ENCODE measurements at regions of chr9 and their contacts with region 1.

Region 1: DNA sequence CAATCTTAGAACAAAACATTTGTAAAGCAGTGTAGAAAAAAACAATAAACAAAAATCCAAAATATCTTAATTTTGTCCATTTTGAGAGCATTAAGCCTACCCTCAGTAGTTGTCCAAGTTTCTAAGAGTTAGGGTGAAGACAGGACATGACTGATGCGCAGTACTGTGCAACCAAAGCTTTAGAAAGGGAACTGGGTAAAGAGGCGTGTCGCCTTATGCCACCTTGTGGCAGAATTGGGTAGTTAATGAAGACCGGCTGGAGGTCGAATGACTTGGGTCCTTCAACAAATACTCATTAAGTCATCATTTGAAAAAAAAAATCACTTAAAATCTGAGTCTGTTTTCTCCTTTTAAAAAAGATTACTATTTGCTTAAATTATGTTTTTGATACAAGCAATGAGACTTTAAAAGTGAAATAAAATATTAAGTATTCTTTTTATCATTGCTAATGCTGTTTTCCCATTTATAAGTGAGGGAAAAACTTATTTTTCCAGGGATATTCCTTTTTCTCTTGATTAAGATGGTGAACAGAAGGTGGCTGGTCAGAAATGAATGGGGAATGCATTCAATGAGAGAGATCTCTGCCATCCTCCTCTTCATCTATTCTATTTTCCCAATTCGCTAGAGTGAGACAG is 3.5 kb upstream of the RNF20 start:
- DNase-seq: peak; percentile 69 to 79
- ATAC-seq: peak; percentile 62; a peak in 5 of 6 replicates
- H3K4me3 ChIP-seq: no peak overlapping the region
- H3K27ac ChIP-seq: no peak overlapping the region
- H3K4me1 ChIP-seq: peaks cover 5% of the 10 kb centered on the region
- CTCF ChIP-seq: peak; percentile 89
- EP300 ChIP-seq: no peak
- POLR2A ChIP-seq: no peak
- RAD21 ChIP-seq: peak; percentile 76 to 78

Region 2: GRCh38 chr9:101409079-101409477 is 121.1 kb before region 1 on chr9:
- CTCF ChIA-PET with region 1: no interaction called
- POLR2A ChIA-PET with region 1: no interaction called
- DNase-seq: peak in 1 of 2 experiments; percentile 45
- ATAC-seq: no peak; a peak in 1 of 6 replicates
- H3K4me3 ChIP-seq: no peak overlapping the region
- H3K27ac ChIP-seq: no peak overlapping the region
- H3K4me1 ChIP-seq: no peaks in the 10 kb centered on the region
- CTCF ChIP-seq: no peak
- EP300 ChIP-seq: no peak
- POLR2A ChIP-seq: no peak
- RAD21 ChIP-seq: no peak

Region 3: DNA sequence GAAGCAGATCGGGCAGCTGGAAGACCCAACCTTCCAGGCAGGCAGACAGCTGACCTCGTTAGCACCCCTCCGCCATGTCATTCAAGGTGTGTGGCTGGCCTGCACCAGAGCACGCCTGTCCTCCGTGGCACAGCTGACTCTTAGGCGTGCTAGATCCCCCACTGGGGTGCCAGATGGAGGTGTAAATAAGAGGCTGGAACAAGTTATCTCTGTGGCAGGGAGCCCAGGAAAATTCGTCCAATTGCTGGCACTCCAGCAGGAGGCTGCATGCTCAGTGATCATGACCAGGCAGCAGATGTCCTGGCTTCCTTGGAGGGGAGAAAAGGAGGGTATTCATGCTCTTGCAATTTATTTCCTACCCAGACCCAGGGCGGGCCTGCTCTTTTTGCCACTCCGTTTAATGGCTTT is 86.8 kb before region 1 on chr9:
- CTCF ChIA-PET with region 1: interaction called, 81 read pairs
- POLR2A ChIA-PET with region 1: no interaction called
- DNase-seq: no peak
- ATAC-seq: no peak
- H3K4me3 ChIP-seq: no peak overlapping the region
- H3K27ac ChIP-seq: no peak overlapping the region
- H3K4me1 ChIP-seq: 0 out of 3 replicates have a peak, but pooled peaks cover 4% of the 10 kb centered on the region
- CTCF ChIP-seq: no peak
- EP300 ChIP-seq: no peak
- POLR2A ChIP-seq: no peak
- RAD21 ChIP-seq: no peak

Region 4: GRCh38 chr9:101458955-101459631 is 71.1 kb before region 1 on chr9:
- CTCF ChIA-PET with region 1: interaction called, 178 read pairs
- POLR2A ChIA-PET with region 1: interaction called, 5 read pairs
- DNase-seq: peak; percentile 58 to 81
- ATAC-seq: peak; percentile 97 to 99
- H3K4me3 ChIP-seq: no peak overlapping the region
- H3K27ac ChIP-seq: no peak overlapping the region
- H3K4me1 ChIP-seq: no peaks in the 10 kb centered on the region
- CTCF ChIP-seq: peak; percentile 81
- EP300 ChIP-seq: no peak
- POLR2A ChIP-seq: no peak
- RAD21 ChIP-seq: peak; percentile 78 to 84

Region 5: GRCh38 chr9:101477736-101478135 is 52.5 kb before region 1 on chr9:
- CTCF ChIA-PET with region 1: interaction called, 11 read pairs
- POLR2A ChIA-PET with region 1: no interaction called
- DNase-seq: no peak
- ATAC-seq: no peak
- H3K4me3 ChIP-seq: no peak overlapping the region
- H3K27ac ChIP-seq: no peak overlapping the region
- H3K4me1 ChIP-seq: peaks cover 5% of the 10 kb centered on the region; the same call in 1 of the 3 replicates
- CTCF ChIP-seq: no peak
- EP300 ChIP-seq: no peak
- POLR2A ChIP-seq: no peak
- RAD21 ChIP-seq: no peak

Region 6: GRCh38 chr9:101514071-101514470 is 16.1 kb before region 1 on chr9:
- CTCF ChIA-PET with region 1: interaction called, 14 read pairs
- POLR2A ChIA-PET with region 1: no interaction called
- DNase-seq: no peak
- ATAC-seq: no peak
- H3K4me3 ChIP-seq: no peak overlapping the region
- H3K27ac ChIP-seq: no peak overlapping the region
- H3K4me1 ChIP-seq: no peaks in the 10 kb centered on the region
- CTCF ChIP-seq: no peak
- EP300 ChIP-seq: no peak
- POLR2A ChIP-seq: no peak
- RAD21 ChIP-seq: no peak

Region 7: DNA sequence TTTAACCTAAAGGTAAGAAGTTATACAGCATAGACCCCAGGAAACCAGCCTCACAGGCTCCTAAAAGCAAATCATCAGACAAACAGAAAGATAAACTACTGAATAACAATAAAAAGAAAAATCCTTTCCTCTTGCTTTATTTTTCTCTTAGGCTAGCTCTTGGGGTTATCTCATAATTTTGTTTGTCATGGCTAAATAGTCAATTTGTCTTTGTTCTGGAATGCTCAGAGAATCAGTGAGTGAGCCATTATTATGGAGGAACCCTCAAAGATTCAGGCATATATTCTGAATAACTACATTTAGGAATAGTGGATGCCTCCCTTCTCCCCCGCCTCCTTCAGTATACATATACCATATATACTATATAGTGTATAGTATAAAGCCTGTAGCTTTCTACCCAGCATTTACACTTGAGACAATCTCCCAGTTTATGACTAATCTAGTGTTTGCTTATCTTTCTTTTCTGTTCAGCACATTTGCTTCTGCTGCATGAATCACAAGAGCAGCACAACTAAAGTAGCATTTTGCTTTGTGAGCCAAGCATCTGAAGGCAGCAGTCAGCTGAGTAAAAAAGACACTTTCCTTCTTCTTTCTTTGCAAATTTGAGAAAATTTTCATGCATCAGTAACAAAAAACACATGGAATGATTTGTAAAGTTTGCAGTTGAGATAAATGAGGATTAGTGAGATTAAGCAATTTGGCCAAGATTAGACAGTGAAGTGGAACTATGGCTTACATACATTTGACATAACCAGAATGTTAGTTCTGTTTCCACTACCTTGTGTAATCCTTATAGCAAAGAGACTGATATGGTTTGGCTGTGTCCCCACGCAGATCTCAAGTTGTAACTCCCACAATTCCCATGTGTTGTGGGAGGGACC is 109.8 kb after region 1 on chr9:
- CTCF ChIA-PET with region 1: no interaction called
- POLR2A ChIA-PET with region 1: no interaction called
- DNase-seq: no peak
- ATAC-seq: peak in 1 of 2 experiments; percentile 34; a peak in 1 of 6 replicates
- H3K4me3 ChIP-seq: no peak overlapping the region
- H3K27ac ChIP-seq: no peak overlapping the region
- H3K4me1 ChIP-seq: no peaks in the 10 kb centered on the region
- CTCF ChIP-seq: no peak
- EP300 ChIP-seq: no peak
- POLR2A ChIP-seq: no peak
- RAD21 ChIP-seq: no peak

Region 8: GRCh38 chr9:101738566-101739183 is 208.5 kb after region 1 on chr9 and contains the start of gene GRIN3A:
- CTCF ChIA-PET with region 1: no interaction called
- POLR2A ChIA-PET with region 1: no interaction called
- DNase-seq: peak; percentile 6 to 18
- ATAC-seq: peak; percentile 73 to 88
- H3K4me3 ChIP-seq: peak within 1 kb of the TSS; percentile 46
- H3K27ac ChIP-seq: no peak within 1 kb of the TSS
- H3K4me1 ChIP-seq: no peaks in the 10 kb centered on the region
- CTCF ChIP-seq: no peak
- EP300 ChIP-seq: no peak
- POLR2A ChIP-seq: no peak
- RAD21 ChIP-seq: peak in 1 of 2 experiments; percentile 43; a peak in 3 of 5 replicates
- polyA plus RNA-seq, gene GRIN3A: not detected in 2 replicates

Measured in A549 (cell line).